ENCODE measurements at regions of chr3 and their contacts with region 1.

Region 1: GRCh38 chr3:122415720-122416654 is at the start of gene WDR5B:
- DNase-seq: peak; percentile 95
- ATAC-seq: peak; percentile 89
- H3K4me3 Mint-ChIP-seq: peak within 1 kb of the TSS; percentile 98
- H3K27ac Mint-ChIP-seq: peak within 1 kb of the TSS; percentile 100
- H3K4me1 Mint-ChIP-seq: peaks cover 46% of the 10 kb centered on the region
- H3K27me3 Mint-ChIP-seq: no peaks in the 10 kb centered on the region
- CTCF ChIP-seq: no peak
- total RNA-seq, gene WDR5B: 8.0 and 8.1 TPM in 2 replicates

Region 2: GRCh38 chr3:121660356-121661171 is 755.4 kb before region 1 on chr3 and contains the start of gene HCLS1:
- CTCF ChIA-PET with region 1: no interaction called
- POLR2A ChIA-PET with region 1: interaction called, 8 read pairs
- intact Hi-C with region 1: loop called (anchors 1 kb)
- DNase-seq: peak; percentile 73
- ATAC-seq: peak; percentile 85
- H3K4me3 Mint-ChIP-seq: peak within 1 kb of the TSS; percentile 90
- H3K27ac Mint-ChIP-seq: peak within 1 kb of the TSS; percentile 96
- H3K4me1 Mint-ChIP-seq: peaks cover 55% of the 10 kb centered on the region
- H3K27me3 Mint-ChIP-seq: no peaks in the 10 kb centered on the region
- CTCF ChIP-seq: no peak
- total RNA-seq, gene HCLS1: 434 and 440 TPM in 2 replicates

Region 3: DNA sequence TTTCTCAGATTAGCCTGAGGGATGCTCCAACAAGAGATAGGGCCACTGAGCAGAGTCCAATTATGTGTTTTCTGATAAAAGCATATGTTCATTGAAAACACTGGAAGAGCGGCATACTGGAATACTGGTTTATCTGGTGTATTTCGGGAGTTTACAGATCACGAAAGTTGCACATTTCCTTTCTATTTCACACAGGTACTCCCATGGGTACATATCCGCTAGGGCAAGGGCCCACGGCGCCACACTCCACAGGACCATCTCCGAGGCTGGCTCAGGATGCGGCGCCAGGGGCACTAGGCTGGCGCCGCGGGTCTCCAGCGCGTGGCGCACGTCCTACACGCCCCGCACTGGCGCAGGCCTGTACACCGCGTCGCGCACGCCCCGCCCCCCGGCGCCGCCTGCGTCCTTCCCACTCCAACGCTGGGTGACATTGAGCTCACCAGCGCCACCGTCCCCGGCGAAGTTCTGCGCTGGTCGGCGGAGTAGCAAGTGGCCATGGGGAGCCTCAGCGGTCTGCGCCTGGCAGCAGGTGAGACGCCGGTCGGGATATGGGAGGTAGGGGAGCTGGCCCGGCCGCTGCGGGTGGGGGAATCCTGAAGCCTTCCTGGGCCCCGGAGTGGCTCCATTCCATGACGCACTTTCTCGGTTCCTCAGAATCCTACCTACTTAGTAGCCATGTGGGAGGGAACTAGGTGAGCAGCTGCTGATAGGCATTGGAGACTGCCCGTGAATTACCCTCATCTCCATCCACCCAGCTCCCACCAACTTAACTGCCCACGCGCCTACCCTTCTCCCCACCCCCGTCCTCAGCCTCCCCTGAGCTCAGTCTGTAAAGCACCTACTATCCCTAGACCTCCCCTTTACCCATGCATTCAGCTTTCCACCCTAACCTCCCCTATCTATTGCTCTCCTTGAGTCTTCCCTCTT is 32.0 kb before region 1 on chr3 and contains the start of gene FAM162A:
- CTCF ChIA-PET with region 1: interaction called, 11 read pairs
- POLR2A ChIA-PET with region 1: interaction called, 55 read pairs
- intact Hi-C with region 1: loop called (anchors 1 kb)
- DNase-seq: peak; percentile 93
- ATAC-seq: peak; percentile 94
- H3K4me3 Mint-ChIP-seq: peak within 1 kb of the TSS; percentile 94
- H3K27ac Mint-ChIP-seq: peak within 1 kb of the TSS; percentile 91
- H3K4me1 Mint-ChIP-seq: peaks cover 38% of the 10 kb centered on the region
- H3K27me3 Mint-ChIP-seq: no peaks in the 10 kb centered on the region
- CTCF ChIP-seq: no peak
- total RNA-seq, gene FAM162A: 28.5 and 33.9 TPM in 2 replicates

Region 4: GRCh38 chr3:122533931-122534334 is 117.9 kb after region 1 on chr3:
- CTCF ChIA-PET with region 1: no interaction called
- POLR2A ChIA-PET with region 1: interaction called, 13 read pairs
- intact Hi-C with region 1: no loop called
- DNase-seq: no peak
- ATAC-seq: peak; percentile 92
- H3K4me3 Mint-ChIP-seq: no peak overlapping the region
- H3K27ac Mint-ChIP-seq: no peak overlapping the region
- H3K4me1 Mint-ChIP-seq: peaks cover 3% of the 10 kb centered on the region
- H3K27me3 Mint-ChIP-seq: no peaks in the 10 kb centered on the region
- CTCF ChIP-seq: no peak

Region 5: DNA sequence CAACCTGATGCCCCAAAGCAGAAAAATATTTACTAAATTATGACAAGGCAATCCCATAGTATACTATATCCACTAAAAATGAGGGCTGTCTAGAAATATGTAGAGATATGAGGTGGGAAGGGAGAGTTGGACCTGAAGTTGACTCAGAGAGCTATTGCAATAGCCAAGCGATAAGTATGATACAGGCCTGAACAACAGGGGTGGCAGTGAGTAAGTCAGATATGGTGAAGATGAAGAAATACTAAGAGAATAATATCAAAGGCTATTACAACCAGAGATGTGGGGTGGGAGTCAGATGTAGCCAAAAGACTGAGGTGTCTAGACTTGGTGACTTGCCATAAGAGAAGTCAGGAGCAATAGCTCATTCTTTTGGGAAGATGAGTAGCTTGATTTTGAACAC is 368.4 kb after region 1 on chr3:
- CTCF ChIA-PET with region 1: no interaction called
- POLR2A ChIA-PET with region 1: interaction called, 10 read pairs
- intact Hi-C with region 1: no loop called
- DNase-seq: no peak
- ATAC-seq: no peak
- H3K4me3 Mint-ChIP-seq: no peak overlapping the region
- H3K27ac Mint-ChIP-seq: no peak overlapping the region
- H3K4me1 Mint-ChIP-seq: peaks cover 6% of the 10 kb centered on the region
- H3K27me3 Mint-ChIP-seq: no peaks in the 10 kb centered on the region
- CTCF ChIP-seq: no peak

Region 6: DNA sequence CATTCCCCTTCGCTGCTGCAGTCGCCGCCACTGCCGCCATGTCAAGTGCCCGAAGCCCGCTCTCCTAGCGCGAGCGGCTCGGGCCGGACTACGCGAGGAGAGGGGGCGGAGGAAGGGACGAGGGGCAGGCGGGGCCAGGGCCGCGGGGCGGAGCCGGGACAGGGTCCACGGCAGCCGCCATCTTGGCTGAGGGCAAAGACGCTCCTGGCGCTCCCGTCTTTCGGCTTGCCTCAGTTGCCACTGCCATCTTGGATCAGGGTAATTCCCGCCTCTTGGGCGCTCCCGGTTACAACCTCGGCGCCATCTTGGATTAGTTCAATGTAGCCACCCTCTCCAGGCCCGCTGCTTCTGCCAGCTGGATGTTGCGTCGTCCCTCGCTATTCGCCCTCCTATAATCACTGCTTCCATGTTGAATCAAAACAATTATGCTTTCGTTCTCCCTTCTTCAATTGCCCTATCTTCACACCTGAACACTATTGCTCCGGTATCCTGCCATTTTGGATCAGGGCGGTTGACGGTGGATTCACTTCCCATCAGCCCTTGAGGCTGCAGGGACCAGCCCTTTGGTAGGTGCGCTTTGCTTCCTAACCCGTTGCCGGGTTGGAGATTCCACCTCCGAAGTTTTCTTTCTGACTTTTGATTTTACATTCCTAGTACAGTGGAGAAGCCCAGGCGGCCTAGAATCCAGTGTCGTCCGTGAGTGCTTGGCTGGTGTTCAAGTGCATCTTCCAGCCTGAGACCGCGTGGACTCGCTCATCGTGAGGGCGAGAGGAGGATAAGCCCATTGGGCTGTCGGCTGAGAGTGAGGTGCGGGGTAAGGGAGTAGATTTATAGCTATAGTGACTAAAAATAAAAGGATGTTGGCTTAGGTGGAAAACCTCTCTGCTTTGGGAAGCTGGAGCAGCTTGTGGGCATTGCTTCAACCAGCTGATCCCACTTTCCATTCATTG is 1169.3 kb after region 1 on chr3 and contains the start of gene HACD2:
- CTCF ChIA-PET with region 1: no interaction called
- POLR2A ChIA-PET with region 1: no interaction called
- intact Hi-C with region 1: loop called (anchors 10 kb)
- DNase-seq: peak; percentile 94
- ATAC-seq: peak; percentile 93
- H3K4me3 Mint-ChIP-seq: no peak within 1 kb of the TSS
- H3K27ac Mint-ChIP-seq: peak within 1 kb of the TSS; percentile 82
- H3K4me1 Mint-ChIP-seq: peaks cover 25% of the 10 kb centered on the region
- H3K27me3 Mint-ChIP-seq: no peaks in the 10 kb centered on the region
- CTCF ChIP-seq: no peak
- total RNA-seq, gene HACD2: 31.9 and 32.9 TPM in 2 replicates

Measured in activated B cell treated with CpG ODN at 0.5 μM for 24 hours (primary cell).